Caco-2 (cell line): ENCODE measurements at regions of chr16 and their contacts with region 1.

Region 1: DNA sequence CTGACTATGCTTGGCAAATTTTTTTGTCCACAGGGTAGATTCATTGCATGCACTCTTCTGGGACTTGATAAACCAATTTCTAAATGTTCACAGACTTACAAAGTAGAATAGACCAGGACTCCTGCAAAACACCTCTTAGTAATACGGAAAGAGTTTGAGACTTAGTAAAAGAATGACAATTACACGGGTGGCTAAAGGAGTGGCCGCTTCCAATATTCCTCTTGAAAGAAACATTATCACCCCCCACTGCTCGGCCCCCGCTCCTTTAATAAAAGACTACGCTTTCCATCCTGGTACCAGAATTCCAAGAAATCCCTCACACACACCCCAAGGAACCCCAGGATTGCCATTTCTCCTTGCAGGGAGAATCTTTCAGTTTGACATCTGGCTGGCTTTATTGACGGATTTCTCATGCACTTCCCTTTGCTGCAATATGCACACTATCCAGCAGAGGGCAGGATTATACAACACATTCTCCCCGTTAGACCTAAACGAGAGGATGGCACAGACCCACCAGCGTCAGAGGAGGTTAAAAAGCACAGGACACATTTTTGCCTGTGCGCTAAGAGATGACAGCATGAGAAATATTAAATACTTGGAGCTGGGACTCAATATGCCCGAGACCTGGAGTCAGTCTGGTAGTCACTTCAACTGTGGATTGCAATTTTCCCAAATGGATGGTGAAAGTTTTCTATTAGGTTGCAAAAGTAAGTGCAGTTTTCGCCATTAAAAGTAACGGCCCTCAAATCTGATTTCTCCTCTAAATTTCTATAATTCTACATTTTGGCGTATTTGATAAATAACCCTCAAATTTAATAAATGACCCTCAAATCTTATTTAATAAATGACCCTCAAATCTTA is 46.6 kb upstream of the NUDT7 start:
- DNase-seq: peak; percentile 72 to 78
- H3K4me3 ChIP-seq: no peak overlapping the region
- H3K4me3 Mint-ChIP-seq: no peak overlapping the region
- H3K27ac Mint-ChIP-seq: no peak overlapping the region
- H3K4me1 ChIP-seq: peaks cover 4% of the 10 kb centered on the region; the same call in 1 of the 2 replicates
- H3K4me1 Mint-ChIP-seq: no peaks in the 10 kb centered on the region
- H3K27me3 ChIP-seq: no peaks in the 10 kb centered on the region; the same call in 1 of the 2 replicates
- H3K27me3 Mint-ChIP-seq: peaks cover 6% of the 10 kb centered on the region
- CTCF ChIP-seq: peak; percentile 86 to 93

Region 2: GRCh38 chr16:77782694-77783093 is 107.0 kb after region 1 on chr16:
- CTCF ChIA-PET with region 1: interaction called, 3 read pairs
- POLR2A ChIA-PET with region 1: no interaction called
- intact Hi-C with region 1: loop called (anchors 1 kb)
- DNase-seq: peak in 1 of 2 experiments; percentile 14
- H3K4me3 ChIP-seq: no peak overlapping the region
- H3K4me3 Mint-ChIP-seq: no peak overlapping the region
- H3K27ac Mint-ChIP-seq: no peak overlapping the region
- H3K4me1 ChIP-seq: 0 out of 2 replicates have a peak, but pooled peaks cover 3% of the 10 kb centered on the region
- H3K4me1 Mint-ChIP-seq: no peaks in the 10 kb centered on the region
- H3K27me3 ChIP-seq: no peaks in the 10 kb centered on the region
- H3K27me3 Mint-ChIP-seq: peaks cover 20% of the 10 kb centered on the region
- CTCF ChIP-seq: peak; percentile 24 to 40

Region 3: DNA sequence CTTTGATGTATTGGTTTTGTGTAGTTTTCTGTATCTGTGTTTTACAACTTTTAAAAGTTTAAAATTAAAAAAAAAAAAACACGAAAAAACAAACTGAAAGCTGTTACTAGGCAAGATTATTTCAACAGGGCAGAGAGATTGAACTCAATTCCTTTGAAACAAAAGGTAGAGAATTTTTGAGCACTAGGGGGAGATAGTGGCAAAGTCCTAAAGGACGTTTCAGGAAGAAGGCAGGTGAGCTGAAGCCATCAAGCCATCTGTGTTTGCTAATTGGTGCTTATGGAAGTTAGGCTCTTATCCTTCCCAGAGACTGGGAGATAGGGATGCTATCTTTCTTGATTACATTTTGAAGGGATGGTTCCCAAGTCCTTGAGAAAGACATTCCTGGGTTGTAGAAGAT is 276.1 kb after region 1 on chr16:
- CTCF ChIA-PET with region 1: interaction called, 3 read pairs
- POLR2A ChIA-PET with region 1: no interaction called
- intact Hi-C with region 1: loop called (anchors 5 kb)
- DNase-seq: peak in 1 of 2 experiments; percentile 65
- H3K4me3 ChIP-seq: no peak overlapping the region
- H3K4me3 Mint-ChIP-seq: no peak overlapping the region
- H3K27ac Mint-ChIP-seq: no peak overlapping the region
- H3K4me1 ChIP-seq: no peaks in the 10 kb centered on the region
- H3K4me1 Mint-ChIP-seq: no peaks in the 10 kb centered on the region
- H3K27me3 ChIP-seq: no peaks in the 10 kb centered on the region
- H3K27me3 Mint-ChIP-seq: peaks cover 20% of the 10 kb centered on the region
- CTCF ChIP-seq: peak; percentile 47 to 74

Region 4: DNA sequence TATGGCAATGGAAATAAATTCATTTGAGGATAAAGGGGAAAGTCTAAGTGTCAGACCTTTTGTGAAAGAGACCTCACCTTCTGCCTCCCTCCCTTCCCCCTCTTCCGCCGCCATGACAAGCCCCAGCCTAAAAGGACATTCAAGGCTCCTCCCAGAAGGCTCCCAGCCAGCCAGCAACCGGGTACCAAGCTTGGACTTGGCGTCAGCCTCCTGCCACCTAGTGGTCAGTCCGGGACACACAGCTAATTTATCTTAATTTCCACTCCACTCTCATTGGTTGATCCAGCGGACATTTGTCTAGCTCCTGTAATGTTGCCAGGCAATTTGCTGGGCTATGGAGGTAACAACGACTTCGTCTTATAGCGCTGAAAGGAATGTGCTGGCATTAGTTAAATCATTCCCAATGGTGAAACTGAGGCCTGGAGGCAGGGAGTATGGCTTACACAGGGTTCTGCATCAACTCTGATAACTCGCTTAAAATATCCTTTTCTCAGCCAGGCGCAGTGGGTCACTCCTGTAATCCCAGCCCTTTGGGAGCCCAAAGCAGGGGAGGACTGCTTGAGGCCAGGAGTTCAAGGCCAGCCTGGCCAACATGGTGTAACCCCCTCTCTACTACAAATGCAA is 327.3 kb after region 1 on chr16:
- CTCF ChIA-PET with region 1: interaction called, 4 read pairs
- POLR2A ChIA-PET with region 1: no interaction called
- intact Hi-C with region 1: loop called (anchors 1 kb)
- DNase-seq: peak; percentile 84 to 87
- H3K4me3 ChIP-seq: no peak overlapping the region
- H3K4me3 Mint-ChIP-seq: no peak overlapping the region
- H3K27ac Mint-ChIP-seq: no peak overlapping the region
- H3K4me1 ChIP-seq: no peaks in the 10 kb centered on the region
- H3K4me1 Mint-ChIP-seq: no peaks in the 10 kb centered on the region
- H3K27me3 ChIP-seq: no peaks in the 10 kb centered on the region
- H3K27me3 Mint-ChIP-seq: no peaks in the 10 kb centered on the region
- CTCF ChIP-seq: peak; percentile 75 to 84